ENCODE measurements at regions of chr6 and their contacts with region 1.

Region 1: DNA sequence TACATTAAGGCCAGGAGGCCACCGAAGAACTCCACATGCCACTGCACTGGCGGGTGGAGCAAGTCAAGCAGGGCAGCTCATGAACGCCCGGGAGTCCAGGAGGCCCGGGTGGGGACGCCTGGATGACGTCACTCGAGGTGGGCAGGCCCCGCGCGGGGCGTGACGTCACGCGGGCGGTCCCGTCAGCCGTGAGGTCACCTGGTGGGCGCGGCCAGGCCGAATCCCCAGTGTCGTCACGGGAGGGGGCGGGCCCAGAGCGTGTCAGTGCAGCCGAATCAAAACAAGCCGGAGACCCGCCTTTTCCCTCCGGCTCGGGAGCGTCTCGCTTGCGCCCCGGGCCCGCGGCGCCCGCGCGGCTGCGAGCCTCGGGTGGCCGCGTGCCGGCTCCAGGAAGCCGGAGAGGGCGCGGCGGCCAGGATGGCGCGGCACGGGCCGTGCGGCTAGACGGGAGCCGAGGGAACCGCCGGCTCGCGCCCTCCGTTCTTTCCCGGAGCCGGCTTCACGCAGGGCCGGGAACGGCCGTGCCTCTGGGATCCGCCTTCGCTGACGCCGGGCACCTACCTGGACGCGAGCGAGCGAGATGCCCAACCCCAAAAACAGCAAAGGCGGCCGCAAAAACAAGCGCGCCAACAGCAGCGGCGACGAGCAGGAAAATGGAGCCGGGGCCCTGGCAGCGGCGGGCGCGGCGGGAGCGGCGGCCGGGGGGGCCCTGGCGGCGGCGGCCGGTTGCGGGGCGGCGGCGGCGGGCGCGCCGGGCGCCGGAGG is at the start of gene HECA:
- DNase-seq: peak; percentile 99
- ATAC-seq: peak; percentile 94
- total RNA-seq, gene HECA: 54.9 TPM

Region 2: GRCh38 chr6:139150920-139151319 is 15.9 kb after region 1 on chr6:
- intact Hi-C with region 1: loop called (anchors 2 kb)
- DNase-seq: no peak
- ATAC-seq: no peak

Region 3: GRCh38 chr6:139250296-139251044 is 115.5 kb after region 1 on chr6:
- intact Hi-C with region 1: loop called (anchors 1 kb)
- DNase-seq: no peak
- ATAC-seq: peak; percentile 84

Region 4: DNA sequence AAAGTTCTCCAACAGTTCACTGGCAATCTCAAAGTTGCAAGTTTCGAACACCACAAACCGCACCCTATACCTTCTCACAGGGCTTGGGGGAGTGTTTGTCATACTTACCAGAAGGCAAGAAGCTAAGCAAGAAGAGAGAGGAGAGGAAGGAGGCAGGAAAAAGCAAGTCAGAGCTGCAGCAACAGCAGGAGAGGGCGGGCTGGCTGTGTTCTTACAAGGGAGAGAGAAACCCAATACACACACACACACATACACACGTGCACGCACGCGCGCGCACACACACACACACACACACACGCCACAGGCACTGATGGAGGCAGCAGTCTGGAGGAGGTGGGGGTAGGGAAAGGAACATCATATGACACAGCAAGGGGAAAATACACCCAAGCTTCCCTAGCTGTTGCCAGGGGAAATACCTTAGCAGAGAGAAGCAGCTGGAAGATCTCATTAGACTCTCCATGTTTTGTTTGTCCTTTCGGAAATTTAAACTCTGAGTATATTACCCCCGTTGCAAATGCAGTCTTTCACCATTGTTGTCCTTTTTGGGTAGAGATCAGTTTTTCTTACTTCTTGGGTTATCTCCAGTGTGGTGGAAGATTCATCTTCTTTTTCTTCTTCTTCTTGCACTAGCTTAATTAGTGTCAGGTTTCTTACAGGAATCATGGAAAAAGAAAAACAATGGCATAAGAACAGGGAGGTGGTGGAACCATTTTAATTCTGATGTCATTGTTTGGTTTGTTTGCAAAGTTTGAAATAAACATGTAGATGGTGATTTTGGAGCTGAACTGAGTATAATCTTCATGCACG is 157.0 kb after region 1 on chr6 and contains the start of gene TXLNB:
- intact Hi-C with region 1: loop called (anchors 5 kb)
- DNase-seq: peak; percentile 92
- ATAC-seq: peak; percentile 88
- total RNA-seq, gene TXLNB: 122 TPM

Measured in Right ventricle myocardium inferior (tissue), 1 donor.